CD8-positive, alpha-beta T cell (primary cell): ENCODE measurements at regions of chr19 and their contacts with region 1.

Region 1: GRCh38 chr19:57320180-57321084 is at the start of gene ZNF543:
- DNase-seq: peak; percentile 85 to 96 (median 91)
- ATAC-seq: peak; percentile 95
- H3K4me3 ChIP-seq: peak within 1 kb of the TSS; percentile 61 to 94
- H3K4me3 Mint-ChIP-seq: peak within 1 kb of the TSS; percentile 92
- H3K27ac ChIP-seq: peak within 1 kb of the TSS; percentile 78 to 94
- H3K27ac Mint-ChIP-seq: peak within 1 kb of the TSS; percentile 96
- H3K4me1 ChIP-seq: peaks cover 21% of the 10 kb centered on the region
- H3K4me1 Mint-ChIP-seq: peaks cover 32% of the 10 kb centered on the region
- H3K27me3 ChIP-seq: peaks cover 6 to 7% of the 10 kb centered on the region in 2 experiments
- H3K27me3 Mint-ChIP-seq: peaks cover 22% of the 10 kb centered on the region
- CTCF ChIP-seq: no peak
- total RNA-seq, gene ZNF543: 4.3 to 4.9 TPM

Region 2: GRCh38 chr19:57350877-57351805 is 30.7 kb after region 1 on chr19 and contains the start of gene ZNF304:
- CTCF ChIA-PET with region 1: no interaction called
- POLR2A ChIA-PET with region 1: no interaction called
- intact Hi-C with region 1: loop called in 1 of 2 experiments (anchors 1 kb)
- DNase-seq: peak; percentile 58 to 93 (median 81)
- ATAC-seq: peak; percentile 99
- H3K4me3 ChIP-seq: peak within 1 kb of the TSS; percentile 79 to 87
- H3K4me3 Mint-ChIP-seq: peak within 1 kb of the TSS; percentile 96
- H3K27ac ChIP-seq: peak within 1 kb of the TSS; percentile 68 to 73
- H3K27ac Mint-ChIP-seq: peak within 1 kb of the TSS; percentile 93
- H3K4me1 ChIP-seq: peaks cover 13% of the 10 kb centered on the region
- H3K4me1 Mint-ChIP-seq: peaks cover 32% of the 10 kb centered on the region
- H3K27me3 ChIP-seq: peaks cover 0 to 4% of the 10 kb centered on the region in 2 experiments
- H3K27me3 Mint-ChIP-seq: no peaks in the 10 kb centered on the region
- CTCF ChIP-seq: no peak
- total RNA-seq, gene ZNF304: 8.6 TPM